ENCODE measurements at regions of chr10 and their contacts with region 1.

Region 1: DNA sequence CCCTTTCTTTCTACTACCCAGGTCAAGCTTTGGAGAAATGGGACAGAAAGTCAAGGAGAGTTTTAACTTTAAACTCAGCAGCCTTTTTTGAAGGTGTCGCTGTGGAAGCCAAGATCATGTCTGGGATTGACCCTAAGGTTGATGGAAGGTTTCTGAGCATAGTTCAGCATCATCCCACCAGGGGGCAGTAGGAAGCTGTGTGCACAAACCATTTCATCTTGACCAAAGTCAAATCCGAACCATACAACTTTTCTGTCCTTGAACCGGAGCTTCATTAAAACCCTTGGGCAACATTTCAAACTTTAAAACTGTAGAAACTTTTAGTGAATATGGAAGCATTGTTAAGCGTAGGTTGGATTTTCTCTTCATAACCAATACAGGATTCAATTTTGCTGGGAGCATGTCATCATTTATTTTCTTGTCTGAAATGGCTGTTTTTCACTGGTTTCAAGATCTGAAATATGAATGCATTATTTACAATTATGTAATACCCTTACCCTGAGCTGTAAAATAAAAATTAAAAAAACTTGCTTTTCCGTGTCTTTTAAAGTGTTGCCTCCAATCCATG is 214.4 kb upstream of the KIAA1217 start:
- DNase-seq: peak; percentile 75
- H3K4me3 Mint-ChIP-seq: no peak overlapping the region
- H3K27ac Mint-ChIP-seq: no peak overlapping the region
- H3K4me1 Mint-ChIP-seq: no peaks in the 10 kb centered on the region
- H3K27me3 Mint-ChIP-seq: peaks cover 33% of the 10 kb centered on the region
- CTCF ChIP-seq: peak; percentile 80

Region 2: DNA sequence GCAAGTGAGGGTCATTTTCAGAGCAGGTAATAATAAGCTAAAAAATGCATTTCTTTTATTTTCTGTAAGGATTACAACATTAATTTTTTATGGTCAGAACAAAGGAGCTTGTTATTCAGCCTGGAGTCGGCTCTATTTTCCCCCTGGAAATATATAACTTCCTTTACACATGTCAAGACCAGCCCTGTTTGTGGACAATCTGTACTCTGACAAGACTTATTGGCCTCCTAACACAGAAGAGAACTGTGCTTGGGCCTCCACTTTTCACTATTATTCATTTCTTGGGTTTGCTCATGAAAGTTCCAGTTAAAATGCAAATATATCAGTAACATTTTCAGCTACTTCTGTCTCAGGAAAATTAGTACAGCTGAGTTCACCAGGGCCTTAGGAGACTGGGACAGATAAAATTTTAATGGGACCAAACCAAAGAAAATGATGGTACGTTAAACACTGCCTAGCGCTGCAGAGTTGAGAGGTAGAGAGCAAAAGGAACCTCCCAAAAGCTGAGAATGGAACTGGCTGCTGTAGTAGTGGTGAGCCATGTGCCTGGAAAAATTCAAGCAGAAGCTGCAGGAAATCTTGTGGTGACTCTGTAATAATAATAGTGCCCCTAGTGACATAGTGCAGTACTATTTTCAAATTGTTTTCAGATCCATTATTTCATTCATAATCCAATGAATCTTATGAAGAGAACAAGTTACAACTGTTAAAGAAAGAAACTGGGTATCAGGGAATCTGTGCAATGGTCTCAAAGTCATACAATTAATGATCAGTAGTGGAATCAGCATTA is 12.8 kb before region 1 on chr10:
- CTCF ChIA-PET with region 1: interaction called, 29 read pairs
- POLR2A ChIA-PET with region 1: no interaction called
- intact Hi-C with region 1: no loop called
- DNase-seq: no peak
- H3K4me3 Mint-ChIP-seq: no peak overlapping the region
- H3K27ac Mint-ChIP-seq: no peak overlapping the region
- H3K4me1 Mint-ChIP-seq: no peaks in the 10 kb centered on the region
- H3K27me3 Mint-ChIP-seq: peaks cover 72% of the 10 kb centered on the region
- CTCF ChIP-seq: no peak

Region 3: DNA sequence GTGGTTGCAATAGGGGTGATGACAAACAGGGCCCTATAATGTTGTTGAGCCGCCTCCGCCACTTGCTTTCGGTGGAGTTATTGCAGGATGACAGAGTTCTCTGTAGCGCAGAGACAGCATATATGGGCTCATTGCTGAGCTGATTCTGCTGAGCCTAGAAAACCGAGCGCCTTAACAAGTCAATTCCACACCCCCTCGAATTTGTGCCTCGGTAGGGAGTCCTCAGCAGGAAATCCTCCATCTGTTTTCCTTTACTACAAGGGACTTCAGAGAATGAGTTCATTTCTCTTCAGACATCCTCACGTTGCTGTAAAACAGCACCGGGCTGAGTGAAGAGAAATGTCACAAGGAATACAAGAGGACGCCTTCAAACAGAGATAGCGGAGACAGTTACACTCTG is 123.7 kb after region 1 on chr10:
- CTCF ChIA-PET with region 1: no interaction called
- POLR2A ChIA-PET with region 1: no interaction called
- intact Hi-C with region 1: no loop called
- DNase-seq: no peak
- H3K4me3 Mint-ChIP-seq: no peak overlapping the region
- H3K27ac Mint-ChIP-seq: no peak overlapping the region
- H3K4me1 Mint-ChIP-seq: no peaks in the 10 kb centered on the region
- H3K27me3 Mint-ChIP-seq: peaks cover 44% of the 10 kb centered on the region
- CTCF ChIP-seq: no peak

Region 4: DNA sequence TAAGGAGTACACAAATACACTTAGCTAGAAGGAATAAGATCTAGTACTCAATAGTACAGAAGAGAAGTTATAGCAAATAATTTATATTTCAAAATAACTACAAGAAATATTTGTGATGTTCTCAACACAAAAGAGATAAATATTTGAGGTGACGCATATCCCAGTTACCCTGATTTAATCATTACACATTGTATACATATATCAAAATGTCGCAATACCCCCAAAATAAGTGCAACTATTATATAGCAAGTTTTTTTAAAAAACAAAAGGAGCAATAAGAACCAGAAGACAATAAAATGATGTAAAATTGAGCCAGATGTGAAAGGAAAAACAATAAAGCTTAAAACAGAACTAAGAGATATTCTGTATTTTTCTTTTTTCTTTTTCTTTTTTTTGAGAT is 155.1 kb after region 1 on chr10:
- CTCF ChIA-PET with region 1: interaction called, 13 read pairs
- POLR2A ChIA-PET with region 1: no interaction called
- intact Hi-C with region 1: no loop called
- DNase-seq: no peak
- H3K4me3 Mint-ChIP-seq: no peak overlapping the region
- H3K27ac Mint-ChIP-seq: no peak overlapping the region
- H3K4me1 Mint-ChIP-seq: no peaks in the 10 kb centered on the region
- H3K27me3 Mint-ChIP-seq: peaks cover 40% of the 10 kb centered on the region
- CTCF ChIP-seq: no peak

Region 5: DNA sequence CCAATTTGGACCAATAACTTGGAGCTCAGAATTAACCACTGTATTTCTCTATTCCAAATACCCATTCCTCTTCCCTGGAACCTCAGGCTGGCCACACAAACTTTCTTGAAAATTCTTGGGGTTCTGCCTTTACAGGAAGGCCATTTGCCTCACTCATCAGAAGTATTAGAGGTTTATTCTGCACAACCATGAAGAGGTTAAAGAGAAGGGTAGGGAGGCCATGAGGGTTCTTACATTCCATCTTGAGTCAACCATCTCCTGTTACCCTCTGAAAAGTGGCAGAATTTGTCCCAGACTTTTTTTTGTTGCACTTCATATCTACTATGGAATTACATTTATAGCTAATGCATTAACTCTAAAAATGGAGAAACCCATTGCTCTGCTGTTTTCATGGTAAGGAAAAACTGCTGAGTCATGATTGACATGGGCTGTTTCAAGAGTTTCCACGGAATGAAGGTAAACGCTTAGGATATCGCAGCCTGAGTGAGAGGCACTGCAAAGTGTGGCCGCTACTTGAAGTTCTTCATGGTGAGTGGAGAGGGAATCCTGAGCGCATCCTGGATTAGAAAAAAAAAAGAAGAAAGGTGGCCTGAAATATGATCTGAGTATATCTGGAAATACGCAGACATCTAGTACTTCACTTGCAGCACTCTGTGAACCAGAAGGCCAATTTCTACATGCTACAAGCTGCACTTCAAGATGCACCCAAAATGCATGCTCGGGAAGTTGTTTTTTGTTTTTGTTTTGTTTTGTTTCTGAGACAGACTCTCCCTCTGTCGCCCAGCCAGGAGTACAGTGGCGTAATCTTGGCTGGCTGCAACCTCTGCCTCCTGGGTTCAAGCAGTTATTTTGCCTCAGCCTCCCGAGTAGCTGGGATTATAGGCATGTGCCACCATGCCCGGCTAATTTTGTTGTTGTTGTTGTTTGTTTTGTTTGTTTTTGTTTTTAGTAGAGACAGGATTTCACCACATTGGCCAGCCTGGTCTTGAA is 298.0 kb after region 1 on chr10:
- CTCF ChIA-PET with region 1: interaction called, 5 read pairs
- POLR2A ChIA-PET with region 1: no interaction called
- intact Hi-C with region 1: loop called (anchors 5 kb)
- DNase-seq: peak; percentile 11
- H3K4me3 Mint-ChIP-seq: no peak overlapping the region
- H3K27ac Mint-ChIP-seq: peak overlapping the region; percentile 70
- H3K4me1 Mint-ChIP-seq: peaks cover 30% of the 10 kb centered on the region
- H3K27me3 Mint-ChIP-seq: no peaks in the 10 kb centered on the region
- CTCF ChIP-seq: no peak

Region 6: GRCh38 chr10:24383681-24384106 is 389.1 kb after region 1 on chr10:
- CTCF ChIA-PET with region 1: interaction called, 6 read pairs
- POLR2A ChIA-PET with region 1: interaction called, 3 read pairs
- intact Hi-C with region 1: loop called (anchors 1 kb)
- DNase-seq: peak; percentile 98
- H3K4me3 Mint-ChIP-seq: peak overlapping the region; percentile 63
- H3K27ac Mint-ChIP-seq: peak overlapping the region; percentile 65
- H3K4me1 Mint-ChIP-seq: peaks cover 25% of the 10 kb centered on the region
- H3K27me3 Mint-ChIP-seq: no peaks in the 10 kb centered on the region
- CTCF ChIP-seq: peak; percentile 55

Region 7: GRCh38 chr10:24556750-24557742 is 562.5 kb after region 1 on chr10:
- CTCF ChIA-PET with region 1: interaction called, 31 read pairs
- POLR2A ChIA-PET with region 1: no interaction called
- intact Hi-C with region 1: loop called (anchors 1 kb)
- DNase-seq: peak; percentile 76
- H3K4me3 Mint-ChIP-seq: no peak overlapping the region
- H3K27ac Mint-ChIP-seq: peak overlapping the region; percentile 24
- H3K4me1 Mint-ChIP-seq: peaks cover 6% of the 10 kb centered on the region
- H3K27me3 Mint-ChIP-seq: no peaks in the 10 kb centered on the region
- CTCF ChIP-seq: peak; percentile 65

Measured in MCF 10A (cell line).